ENCODE measurements at regions of chr19 and their contacts with region 1.

Region 1: DNA sequence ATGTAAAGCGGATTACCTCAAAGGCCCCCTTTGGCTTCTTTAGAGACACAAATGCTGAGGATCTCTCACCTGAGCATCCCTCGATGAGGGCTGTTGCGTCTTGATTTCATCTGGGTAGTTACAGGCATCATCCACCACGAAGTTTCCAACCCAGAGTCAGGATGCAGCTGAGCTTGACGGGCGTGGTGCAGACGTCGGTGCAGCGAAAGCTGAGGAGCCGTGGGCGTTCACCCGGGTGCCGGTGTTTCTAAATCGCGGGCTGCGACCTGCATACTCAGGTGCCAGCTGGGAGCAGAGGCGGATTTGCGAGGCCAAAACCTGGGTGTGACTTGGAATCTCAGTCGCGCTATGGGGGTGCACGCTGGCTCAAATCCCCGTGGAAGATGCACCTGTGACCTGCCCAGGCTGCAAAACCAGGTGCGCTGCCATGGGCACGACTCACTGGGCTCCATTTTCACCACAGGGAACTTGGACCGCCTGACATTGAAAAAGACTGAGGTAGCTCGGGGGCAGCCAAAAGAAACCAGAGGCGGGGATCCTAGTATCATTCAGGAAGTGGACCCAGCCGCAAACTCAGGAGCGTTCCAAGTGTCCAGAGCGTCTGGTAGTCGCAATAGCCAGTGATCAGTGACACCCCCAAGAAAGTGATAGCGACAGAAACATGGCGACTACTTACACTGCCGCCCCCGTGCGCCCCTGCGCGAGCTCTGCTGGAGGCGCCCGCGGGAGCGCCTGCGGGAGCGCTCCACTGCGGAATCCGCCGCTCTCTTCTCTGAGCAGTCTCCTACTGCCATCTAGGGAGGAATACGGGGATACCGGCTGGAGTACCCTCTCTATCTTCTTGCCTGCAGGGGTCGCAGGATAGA is 36.4 kb upstream of the IGFL4 start:
- DNase-seq: peak; percentile 83 to 90 (median 86)
- H3K4me3 ChIP-seq: no peak overlapping the region
- H3K27ac ChIP-seq: no peak overlapping the region
- H3K4me1 ChIP-seq: peaks cover 0 to 6% (median 3%) of the 10 kb centered on the region in 4 experiments
- H3K27me3 ChIP-seq: peaks cover 18 to 91% (median 49%) of the 10 kb centered on the region in 5 experiments

Region 2: GRCh38 chr19:46031781-46032589 is 45.2 kb before region 1 on chr19:
- CTCF ChIA-PET with region 1: interaction called, 14 read pairs
- POLR2A ChIA-PET with region 1: no interaction called
- DNase-seq: no peak
- H3K4me3 ChIP-seq: no peak overlapping the region
- H3K27ac ChIP-seq: no peak overlapping the region
- H3K4me1 ChIP-seq: no peaks in the 10 kb centered on the region
- H3K27me3 ChIP-seq: peaks cover 0 to 49% (median 7%) of the 10 kb centered on the region in 5 experiments

Region 3: GRCh38 chr19:46090444-46090843 is 13.3 kb after region 1 on chr19:
- CTCF ChIA-PET with region 1: no interaction called
- POLR2A ChIA-PET with region 1: no interaction called
- DNase-seq: no peak
- H3K4me3 ChIP-seq: no peak overlapping the region
- H3K27ac ChIP-seq: no peak overlapping the region
- H3K4me1 ChIP-seq: no peaks in the 10 kb centered on the region
- H3K27me3 ChIP-seq: peaks cover 0 to 21% (median 3%) of the 10 kb centered on the region in 5 experiments

Region 4: GRCh38 chr19:46115396-46116106 is 38.4 kb after region 1 on chr19:
- CTCF ChIA-PET with region 1: no interaction called
- POLR2A ChIA-PET with region 1: no interaction called
- DNase-seq: no peak
- H3K4me3 ChIP-seq: no peak overlapping the region
- H3K27ac ChIP-seq: no peak overlapping the region
- H3K4me1 ChIP-seq: no peaks in the 10 kb centered on the region
- H3K27me3 ChIP-seq: peaks cover 2 to 42% (median 11%) of the 10 kb centered on the region in 5 experiments

Region 5: DNA sequence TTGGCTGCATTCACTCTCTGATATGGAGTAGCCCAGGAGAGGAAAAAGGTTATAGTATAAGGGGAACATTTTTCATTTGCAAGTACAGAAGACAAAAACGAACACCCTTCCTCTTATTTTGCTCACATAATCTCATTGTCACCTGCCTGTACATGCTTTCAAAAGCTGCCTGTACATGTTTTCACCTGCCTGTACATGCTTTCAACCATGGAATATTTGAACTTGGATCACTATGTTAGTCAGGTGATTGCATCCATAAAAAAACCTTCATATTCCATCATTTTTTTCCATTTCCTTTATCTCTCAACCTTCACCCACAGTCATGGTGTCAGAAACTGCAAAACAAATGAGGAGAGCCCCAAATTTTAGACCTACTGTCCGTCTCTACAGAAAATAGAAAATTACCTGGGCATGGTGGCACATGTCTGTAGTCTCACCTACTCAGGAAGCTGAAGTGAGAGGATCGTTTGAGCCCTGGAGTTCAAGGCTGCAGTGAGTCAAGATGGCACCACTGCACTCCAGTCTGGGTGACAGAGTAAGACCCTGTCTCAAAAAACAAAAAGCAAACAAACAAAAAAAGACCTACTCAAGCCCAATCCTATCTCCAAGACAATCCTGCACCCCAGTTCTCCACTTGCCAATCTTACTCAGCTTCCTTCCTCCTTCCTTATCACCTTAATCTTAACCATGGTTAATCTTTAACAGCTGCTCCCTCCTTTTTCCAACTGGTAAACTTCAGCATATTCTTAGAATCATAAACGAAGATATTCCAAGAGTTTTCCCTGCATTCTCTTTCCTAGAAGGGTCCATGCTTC is 82.4 kb after region 1 on chr19:
- CTCF ChIA-PET with region 1: no interaction called
- POLR2A ChIA-PET with region 1: no interaction called
- DNase-seq: no peak
- H3K4me3 ChIP-seq: no peak overlapping the region
- H3K27ac ChIP-seq: no peak overlapping the region
- H3K4me1 ChIP-seq: no peaks in the 10 kb centered on the region
- H3K27me3 ChIP-seq: peaks cover 0 to 22% (median 9%) of the 10 kb centered on the region in 5 experiments

Region 6: DNA sequence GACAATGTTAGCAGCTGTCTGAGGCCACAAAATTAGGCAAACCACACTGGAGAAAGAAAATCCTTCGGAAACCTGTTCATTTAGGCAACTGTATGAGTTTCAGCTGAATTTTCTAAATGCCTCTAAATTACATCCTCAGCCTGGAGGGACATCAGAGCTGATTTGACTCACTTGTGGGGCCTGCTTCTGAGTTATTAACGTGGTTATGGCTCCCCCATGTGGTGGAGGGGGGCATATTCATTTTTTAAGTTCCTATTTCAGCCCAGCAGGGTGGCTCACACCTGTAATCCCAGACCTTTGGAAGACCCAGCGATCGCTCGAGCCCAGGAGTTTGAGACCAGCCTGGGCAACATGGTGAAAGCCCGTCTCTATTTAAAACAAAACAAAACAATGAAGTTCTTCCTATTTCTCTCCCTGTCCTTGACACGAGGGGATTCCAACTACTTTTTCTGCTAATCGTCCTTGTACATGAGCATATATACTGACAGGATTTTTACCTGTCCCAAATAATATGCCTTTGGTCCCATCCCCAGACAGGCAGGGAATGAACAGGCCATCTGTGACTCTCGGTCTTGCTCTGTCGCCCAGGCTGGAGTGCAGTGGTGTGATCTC is 188.1 kb after region 1 on chr19:
- CTCF ChIA-PET with region 1: interaction called, 31 read pairs
- POLR2A ChIA-PET with region 1: no interaction called
- DNase-seq: peak; percentile 78 to 89 (median 86)
- H3K4me3 ChIP-seq: no peak overlapping the region
- H3K27ac ChIP-seq: no peak overlapping the region
- H3K4me1 ChIP-seq: peaks cover 0 to 2% (median 0%) of the 10 kb centered on the region in 4 experiments
- H3K27me3 ChIP-seq: peaks cover 0 to 56% (median 10%) of the 10 kb centered on the region in 5 experiments